ENCODE measurements at regions of chr1 and their contacts with region 1.

Region 1: DNA sequence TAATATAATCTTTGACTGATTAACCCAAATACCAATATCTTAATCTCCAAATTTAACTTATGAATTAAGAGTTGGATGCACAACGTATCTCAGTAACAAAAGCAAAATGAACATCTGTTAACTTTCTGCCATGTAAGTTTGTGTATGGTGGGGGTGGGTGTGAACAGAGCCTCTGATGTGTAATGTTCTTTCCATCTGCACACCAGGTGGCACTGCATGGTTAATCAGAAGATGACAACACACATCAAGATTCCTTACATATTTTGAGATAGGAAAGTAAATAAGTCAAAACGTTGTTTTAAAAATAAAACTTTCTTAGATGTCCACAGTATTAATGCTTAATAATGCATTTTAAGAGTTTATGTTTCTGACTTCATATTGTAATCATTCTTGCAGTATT is 251.9 kb downstream of the DPYD start:
- DNase-seq: peak; percentile 64
- ATAC-seq: peak; percentile 91
- H3K4me3 ChIP-seq: no peak overlapping the region
- H3K27ac ChIP-seq: no peak overlapping the region
- H3K4me1 ChIP-seq: peaks cover 7% of the 10 kb centered on the region; the same call in 1 of the 2 replicates
- H3K27me3 ChIP-seq: no peaks in the 10 kb centered on the region
- CTCF ChIP-seq: peak; percentile 76

Region 2: GRCh38 chr1:97778718-97779117 is 109.8 kb after region 1 on chr1:
- CTCF ChIA-PET with region 1: no interaction called
- POLR2A ChIA-PET with region 1: no interaction called
- intact Hi-C with region 1: loop called (anchors 1 kb)
- DNase-seq: peak; percentile 20
- ATAC-seq: peak; percentile 53
- H3K4me3 ChIP-seq: no peak overlapping the region
- H3K27ac ChIP-seq: no peak overlapping the region
- H3K4me1 ChIP-seq: no peaks in the 10 kb centered on the region
- H3K27me3 ChIP-seq: no peaks in the 10 kb centered on the region
- CTCF ChIP-seq: peak; percentile 41; the same call in 1 of the 2 replicates

Region 3: GRCh38 chr1:97820470-97821188 is 151.7 kb after region 1 on chr1:
- CTCF ChIA-PET with region 1: no interaction called
- POLR2A ChIA-PET with region 1: no interaction called
- intact Hi-C with region 1: loop called (anchors 1 kb)
- DNase-seq: peak; percentile 76
- ATAC-seq: peak; percentile 72
- H3K4me3 ChIP-seq: no peak overlapping the region
- H3K27ac ChIP-seq: no peak overlapping the region
- H3K4me1 ChIP-seq: no peaks in the 10 kb centered on the region
- H3K27me3 ChIP-seq: no peaks in the 10 kb centered on the region
- CTCF ChIP-seq: peak; percentile 82

Region 4: DNA sequence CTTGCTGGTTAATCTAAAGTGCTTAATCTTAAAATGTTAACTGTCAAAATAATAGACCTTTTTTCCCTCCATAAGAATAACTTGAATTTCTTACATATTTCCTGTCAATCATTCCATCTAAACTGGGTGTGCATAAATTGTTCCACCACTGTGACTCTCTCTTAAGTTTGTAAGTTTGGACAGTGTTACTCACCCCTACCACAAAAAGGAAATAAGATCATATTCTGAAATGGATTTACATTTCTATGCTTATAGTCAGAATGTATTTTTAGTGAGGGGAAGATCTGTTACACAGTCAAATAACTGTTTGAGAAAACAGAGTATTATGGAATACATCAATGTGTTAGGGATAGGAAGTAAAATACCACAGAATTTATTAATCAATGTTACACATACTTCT is 361.5 kb after region 1 on chr1:
- CTCF ChIA-PET with region 1: no interaction called
- POLR2A ChIA-PET with region 1: no interaction called
- intact Hi-C with region 1: loop called (anchors 5 kb)
- DNase-seq: peak; percentile 89
- ATAC-seq: peak; percentile 85
- H3K4me3 ChIP-seq: peak overlapping the region; percentile 71
- H3K27ac ChIP-seq: peak overlapping the region; percentile 87
- H3K4me1 ChIP-seq: peaks cover 60% of the 10 kb centered on the region
- H3K27me3 ChIP-seq: no peaks in the 10 kb centered on the region
- CTCF ChIP-seq: no peak